Sciatic nerve (tissue), 2 donors: ENCODE measurements at regions of chr17 and their contacts with region 1.

Region 1: DNA sequence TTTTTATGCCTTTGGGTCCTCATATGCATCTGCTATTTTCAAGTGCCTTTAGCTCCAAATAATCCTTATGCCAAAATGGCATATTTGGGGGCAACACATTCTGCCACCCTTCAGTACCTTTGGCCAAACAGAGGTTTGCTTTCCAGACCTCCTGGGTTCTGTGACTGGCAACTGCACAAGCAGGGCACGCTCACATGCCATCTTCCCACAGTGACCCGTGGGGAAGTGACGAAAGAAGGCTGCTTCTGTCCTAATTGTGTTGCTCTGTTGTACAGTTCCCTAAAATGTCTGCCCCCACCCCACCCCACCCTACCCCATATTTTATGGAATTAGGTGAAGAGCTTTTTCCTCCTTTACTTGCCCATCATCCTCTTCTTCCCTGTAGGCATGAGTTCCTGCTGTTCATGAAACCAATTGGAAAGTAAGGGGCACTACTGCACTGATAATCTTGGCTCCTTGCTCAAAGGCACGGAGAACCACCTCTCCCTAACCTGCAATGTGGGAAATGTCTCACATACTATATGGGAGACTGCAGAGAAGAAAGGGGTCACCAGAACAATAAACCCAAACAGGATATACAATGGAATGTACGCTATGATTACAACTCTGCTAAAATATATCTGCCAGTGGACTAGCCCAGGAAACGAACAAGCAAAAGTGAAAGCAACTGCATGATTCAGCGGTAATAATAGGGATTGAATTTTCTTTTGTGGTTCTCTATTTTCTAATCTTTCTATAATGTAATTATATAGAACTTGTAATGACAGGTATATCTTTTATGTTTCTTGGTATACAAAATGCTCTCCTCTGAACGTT is 3.3 kb upstream of the SLFN12L start:
- DNase-seq: peak; percentile 69
- ATAC-seq: peak; percentile 73

Region 2: GRCh38 chr17:35189291-35189690 is 351.5 kb before region 1 on chr17:
- intact Hi-C with region 1: loop called (anchors 10 kb)
- DNase-seq: no peak
- ATAC-seq: no peak

Region 3: GRCh38 chr17:35312790-35313711 is 227.7 kb before region 1 on chr17:
- intact Hi-C with region 1: loop called (anchors 5 kb)
- DNase-seq: peak; percentile 62
- ATAC-seq: peak; percentile 95